ENCODE measurements at regions of chr17 and their contacts with region 1.

Region 1: GRCh38 chr17:4913994-4914393 is 11.1 kb upstream of the CHRNE start:
- DNase-seq: no peak
- ATAC-seq: peak in 1 of 4 donors; percentile 31
- H3K4me3 ChIP-seq: no peak overlapping the region
- H3K27ac ChIP-seq: no peak overlapping the region
- H3K4me1 ChIP-seq: peaks cover 0 to 4% (median 0%) of the 10 kb centered on the region in 3 donors
- H3K27me3 ChIP-seq: no peaks in the 10 kb centered on the region
- CTCF ChIP-seq: no peak

Region 2: DNA sequence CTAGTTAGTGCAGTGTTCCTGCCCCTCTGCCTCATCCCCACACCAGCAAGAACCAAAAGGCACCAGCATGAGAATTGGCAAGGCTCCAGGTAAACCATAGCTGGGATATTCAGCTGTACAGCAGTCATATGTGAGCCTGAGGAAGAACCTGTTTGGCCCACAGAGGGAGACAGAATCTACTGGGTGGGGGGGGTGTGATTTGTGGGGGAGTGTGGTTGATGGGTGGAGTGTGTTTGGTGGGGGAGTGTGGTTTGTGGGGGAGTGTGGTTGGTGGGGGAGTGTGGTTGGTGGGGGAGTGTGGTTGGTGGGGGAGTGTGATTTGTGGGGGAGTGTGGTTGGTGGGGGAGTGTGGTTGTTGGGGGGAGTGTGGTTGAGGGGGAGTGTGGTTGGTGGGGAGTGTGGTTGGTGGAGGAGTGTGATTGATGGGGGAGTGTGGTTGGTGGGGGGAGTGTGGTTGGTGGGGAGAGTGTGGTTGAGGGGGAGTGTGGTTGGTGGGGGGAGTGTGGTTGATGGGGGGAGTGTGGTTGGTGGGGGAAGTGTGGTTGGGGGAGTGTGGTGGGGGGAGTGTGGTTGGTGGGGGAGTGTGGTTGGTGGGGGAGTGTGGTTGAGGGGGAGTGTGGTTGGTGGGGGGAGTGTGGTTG is 61.3 kb before region 1 on chr17:
- intact Hi-C with region 1: no loop called
- DNase-seq: peak in 1 of 6 donors; percentile 13
- ATAC-seq: peak in 2 of 4 donors; percentile 25 to 39
- H3K4me3 ChIP-seq: no peak overlapping the region
- H3K27ac ChIP-seq: no peak overlapping the region
- H3K4me1 ChIP-seq: peaks cover 0 to 4% (median 2%) of the 10 kb centered on the region in 3 donors
- H3K27me3 ChIP-seq: no peaks in the 10 kb centered on the region
- CTCF ChIP-seq: no peak

Region 3: GRCh38 chr17:5050278-5050677 is 136.3 kb after region 1 on chr17:
- intact Hi-C with region 1: loop called in 1 of 3 experiments (anchors 10 kb)
- DNase-seq: no peak
- ATAC-seq: peak in 1 of 4 donors; percentile 24
- H3K4me3 ChIP-seq: no peak overlapping the region
- H3K27ac ChIP-seq: no peak overlapping the region
- H3K4me1 ChIP-seq: no peaks in the 10 kb centered on the region
- H3K27me3 ChIP-seq: no peaks in the 10 kb centered on the region
- CTCF ChIP-seq: no peak

Region 4: DNA sequence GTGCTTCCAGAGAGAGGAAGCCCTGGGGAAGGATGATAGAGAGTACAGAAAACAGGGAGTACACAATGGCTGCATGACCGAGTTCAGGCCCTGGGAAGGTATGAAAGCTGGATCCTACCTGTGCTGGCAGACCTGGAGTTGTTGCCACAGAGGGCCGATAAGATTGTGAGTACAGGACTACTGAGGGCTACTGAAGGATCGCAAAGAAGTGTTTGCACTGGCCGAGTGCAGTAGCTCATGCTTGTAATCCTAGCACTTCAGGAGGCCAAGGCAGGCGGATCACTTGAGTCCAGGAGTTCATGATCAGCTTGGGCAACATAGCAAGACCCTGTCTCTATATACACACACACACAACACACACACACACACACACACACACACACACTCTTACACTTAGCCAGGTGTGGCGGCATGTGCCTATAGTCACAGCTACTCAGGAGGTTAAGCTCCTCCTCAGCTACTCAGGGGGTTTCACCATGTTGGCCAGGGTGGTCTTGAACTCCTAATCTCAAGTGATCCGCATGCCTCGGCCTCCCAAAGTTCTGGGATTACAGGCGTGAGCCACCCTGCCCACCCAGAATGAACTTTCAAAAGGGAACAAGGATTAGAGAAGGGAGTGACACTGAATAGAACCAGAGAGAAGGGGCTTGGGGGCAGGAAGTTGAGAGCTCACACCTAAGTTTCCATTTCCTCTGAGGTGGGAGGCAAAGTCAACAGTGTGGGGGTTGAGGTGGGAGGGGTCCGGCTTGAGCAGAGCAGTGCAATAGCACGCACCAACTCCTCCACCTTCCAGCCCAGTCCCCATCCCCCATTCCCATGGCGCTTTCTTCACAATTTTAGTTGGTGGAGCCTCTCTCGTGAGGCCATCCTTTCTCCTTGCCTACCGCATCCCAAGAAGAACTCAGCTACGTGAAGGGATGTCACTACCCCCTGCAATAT is 313.2 kb after region 1 on chr17:
- intact Hi-C with region 1: no loop called
- DNase-seq: no peak
- ATAC-seq: no peak
- H3K4me3 ChIP-seq: no peak overlapping the region
- H3K27ac ChIP-seq: no peak overlapping the region
- H3K4me1 ChIP-seq: no peaks in the 10 kb centered on the region
- H3K27me3 ChIP-seq: no peaks in the 10 kb centered on the region
- CTCF ChIP-seq: no peak